ENCODE measurements at regions of chr5 and their contacts with region 1.

Region 1: DNA sequence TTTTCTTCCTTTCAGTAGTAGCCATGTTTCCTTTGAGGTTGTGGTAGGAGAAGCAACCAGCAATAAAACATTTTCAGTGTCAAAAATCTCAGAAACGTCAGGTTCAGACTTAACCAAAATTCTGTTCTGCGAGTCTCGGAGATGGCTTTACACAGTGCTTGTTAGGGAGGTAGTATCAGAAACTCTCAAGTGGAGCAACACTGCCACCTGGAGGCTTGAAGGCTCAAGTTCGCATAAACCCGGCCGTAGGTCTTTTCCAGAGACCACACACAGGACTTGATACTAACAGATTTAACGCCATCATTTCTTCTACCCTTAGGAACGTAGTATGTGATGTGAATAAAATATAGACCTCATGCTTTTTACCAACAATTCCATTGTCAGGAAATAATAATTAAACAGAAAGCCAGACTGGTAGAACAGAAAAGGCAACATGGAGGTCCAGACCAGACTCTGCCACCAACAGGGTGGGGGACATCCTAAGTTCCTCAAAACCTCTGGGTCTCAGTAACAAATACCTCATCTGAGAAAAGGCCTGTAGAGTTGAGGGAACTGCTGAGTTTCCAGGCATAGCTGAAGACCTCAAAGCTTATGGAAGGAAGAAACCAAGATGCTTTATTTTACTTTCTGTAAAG is 8.5 kb downstream of the PTGER4 start:
- ATAC-seq: peak; percentile 77 to 97 (median 92)
- H3K4me3 ChIP-seq: no peak overlapping the region
- H3K27ac ChIP-seq: no peak overlapping the region
- H3K4me1 ChIP-seq: no peaks in the 10 kb centered on the region

Region 2: DNA sequence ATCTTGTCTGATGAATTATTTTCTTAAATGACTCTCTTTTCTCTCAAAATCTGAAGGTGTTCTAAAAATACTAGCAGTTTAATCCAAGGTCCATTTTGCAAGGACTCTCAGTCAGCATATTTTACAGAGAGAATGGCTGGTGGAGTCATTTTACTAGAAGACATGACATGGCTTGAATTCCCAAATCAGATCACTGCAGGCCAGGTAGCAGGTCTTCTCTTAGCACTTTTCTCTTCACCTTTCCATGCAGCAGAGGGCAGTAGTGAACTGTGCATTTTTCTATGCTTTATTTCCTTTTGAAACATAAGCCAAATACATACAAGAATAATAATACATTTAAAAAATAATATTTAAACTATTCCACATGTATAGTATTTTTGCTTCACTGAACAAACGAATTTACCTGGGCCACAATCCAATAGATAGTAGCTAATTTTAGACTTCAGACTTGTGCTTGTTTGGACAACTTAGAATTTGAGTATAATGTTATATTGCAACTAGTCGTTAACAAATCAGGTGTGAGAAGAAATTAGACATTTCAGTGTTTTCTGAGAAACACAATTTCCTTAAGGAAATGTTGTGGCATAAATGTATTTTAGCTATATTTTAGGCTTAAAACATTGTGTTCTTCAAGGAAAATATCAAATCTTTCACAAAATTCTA is 974.1 kb before region 1 on chr5:
- in situ Hi-C with region 1: loop called in 4 of 9 experiments (anchors 25 kb)
- ATAC-seq: peak in 3 of 8 experiments; percentile 39 to 47 (median 45)
- H3K4me3 ChIP-seq: no peak overlapping the region
- H3K27ac ChIP-seq: no peak overlapping the region
- H3K4me1 ChIP-seq: no peaks in the 10 kb centered on the region

Region 3: DNA sequence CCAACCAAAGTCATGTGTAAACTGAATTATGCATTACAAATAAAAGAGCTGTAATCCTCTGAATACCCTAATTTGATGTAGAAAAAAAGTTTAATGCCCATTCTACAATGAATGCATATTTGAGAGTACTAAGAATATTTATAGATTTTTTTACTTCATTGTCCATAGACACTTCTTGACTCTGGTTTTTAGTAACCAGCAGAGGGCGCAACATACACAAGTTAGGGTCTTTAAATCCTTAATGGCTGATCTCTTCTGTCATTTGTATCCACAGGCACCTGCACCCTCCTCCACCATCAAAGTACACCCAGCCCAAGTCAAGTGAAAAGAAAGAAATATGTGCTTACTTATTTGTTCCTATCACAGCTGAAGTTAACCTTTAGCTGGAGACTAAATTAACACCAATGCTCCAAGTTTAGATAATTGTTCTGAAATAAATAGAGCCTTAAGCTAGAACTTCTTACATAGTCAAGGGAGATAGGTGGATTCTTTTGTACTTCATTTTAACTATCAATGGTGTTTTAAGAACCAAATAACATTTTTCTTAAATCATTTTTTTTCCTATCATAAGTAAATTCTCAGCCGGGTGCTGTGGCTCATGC is 739.3 kb before region 1 on chr5:
- in situ Hi-C with region 1: loop called in 6 of 9 experiments (anchors 25 kb)
- ATAC-seq: peak; percentile 27 to 99 (median 68)
- H3K4me3 ChIP-seq: no peak overlapping the region
- H3K27ac ChIP-seq: no peak overlapping the region
- H3K4me1 ChIP-seq: no peaks in the 10 kb centered on the region

Region 4: GRCh38 chr5:39970117-39970798 is 718.0 kb before region 1 on chr5:
- in situ Hi-C with region 1: loop called in 3 of 9 experiments (anchors 25 kb)
- ATAC-seq: no peak
- H3K4me3 ChIP-seq: no peak overlapping the region
- H3K27ac ChIP-seq: no peak overlapping the region
- H3K4me1 ChIP-seq: no peaks in the 10 kb centered on the region

Region 5: GRCh38 chr5:40386289-40386688 is 302.0 kb before region 1 on chr5:
- in situ Hi-C with region 1: loop called in 1 of 9 experiments (anchors 25 kb)
- ATAC-seq: peak in 3 of 8 experiments; percentile 87 to 95 (median 94)
- H3K4me3 ChIP-seq: no peak overlapping the region
- H3K27ac ChIP-seq: no peak overlapping the region
- H3K4me1 ChIP-seq: no peaks in the 10 kb centered on the region

Region 6: GRCh38 chr5:41445932-41446563 is 757.8 kb after region 1 on chr5:
- in situ Hi-C with region 1: no loop called
- ATAC-seq: no peak
- H3K4me3 ChIP-seq: no peak overlapping the region
- H3K27ac ChIP-seq: no peak overlapping the region
- H3K4me1 ChIP-seq: no peaks in the 10 kb centered on the region

Measured in motor neuron (in vitro differentiated cells).